A549 (cell line): ENCODE measurements at regions of chr3 and their contacts with region 1.

Region 1: DNA sequence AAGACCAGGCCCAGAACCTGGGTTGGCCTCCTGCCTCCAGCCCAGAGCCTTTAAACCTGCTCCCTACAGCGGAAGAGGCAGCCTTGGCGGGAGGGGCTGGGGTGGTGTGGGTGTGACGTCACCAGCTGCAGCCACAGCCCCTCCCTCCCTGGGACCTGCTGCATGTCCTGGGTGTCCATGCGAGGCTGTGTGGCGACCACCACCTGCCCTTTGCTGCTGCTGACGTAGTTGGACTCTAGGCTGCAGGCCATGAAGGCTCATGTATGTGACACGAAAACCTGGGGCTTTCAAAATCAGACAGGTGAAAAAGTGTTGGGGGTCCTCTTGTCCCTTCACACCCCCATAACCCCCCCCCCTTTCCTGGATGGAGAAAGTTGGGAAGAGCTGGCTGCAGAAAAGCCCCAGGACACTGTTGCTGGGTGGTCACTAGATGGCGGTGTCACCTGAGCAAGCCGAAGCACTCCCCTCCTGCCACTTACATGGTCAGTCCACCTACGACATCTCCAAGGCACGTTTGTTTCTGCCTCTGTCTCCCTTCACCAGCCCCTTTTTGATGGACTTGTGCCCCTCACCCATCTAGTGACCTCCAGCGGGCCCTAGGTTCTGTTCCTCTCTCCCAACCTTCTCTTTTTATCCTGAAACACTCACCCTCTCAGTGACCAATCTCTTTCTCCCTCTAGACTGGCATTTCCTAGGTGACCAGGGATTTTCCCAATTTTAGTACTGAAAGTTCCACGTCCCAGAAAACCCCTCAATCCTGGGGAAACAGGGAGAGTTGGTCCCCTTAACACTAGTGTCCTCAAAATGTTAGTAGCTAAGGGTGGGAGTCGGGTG is 35.2 kb downstream of the SLC6A20 start:
- DNase-seq: peak; percentile 64 to 71
- ATAC-seq: peak; percentile 95 to 97
- H3K4me3 ChIP-seq: no peak overlapping the region
- H3K27ac ChIP-seq: no peak overlapping the region
- H3K4me1 ChIP-seq: no peaks in the 10 kb centered on the region
- CTCF ChIP-seq: peak; percentile 63
- EP300 ChIP-seq: no peak
- POLR2A ChIP-seq: no peak
- RAD21 ChIP-seq: peak; percentile 73 to 79

Region 2: DNA sequence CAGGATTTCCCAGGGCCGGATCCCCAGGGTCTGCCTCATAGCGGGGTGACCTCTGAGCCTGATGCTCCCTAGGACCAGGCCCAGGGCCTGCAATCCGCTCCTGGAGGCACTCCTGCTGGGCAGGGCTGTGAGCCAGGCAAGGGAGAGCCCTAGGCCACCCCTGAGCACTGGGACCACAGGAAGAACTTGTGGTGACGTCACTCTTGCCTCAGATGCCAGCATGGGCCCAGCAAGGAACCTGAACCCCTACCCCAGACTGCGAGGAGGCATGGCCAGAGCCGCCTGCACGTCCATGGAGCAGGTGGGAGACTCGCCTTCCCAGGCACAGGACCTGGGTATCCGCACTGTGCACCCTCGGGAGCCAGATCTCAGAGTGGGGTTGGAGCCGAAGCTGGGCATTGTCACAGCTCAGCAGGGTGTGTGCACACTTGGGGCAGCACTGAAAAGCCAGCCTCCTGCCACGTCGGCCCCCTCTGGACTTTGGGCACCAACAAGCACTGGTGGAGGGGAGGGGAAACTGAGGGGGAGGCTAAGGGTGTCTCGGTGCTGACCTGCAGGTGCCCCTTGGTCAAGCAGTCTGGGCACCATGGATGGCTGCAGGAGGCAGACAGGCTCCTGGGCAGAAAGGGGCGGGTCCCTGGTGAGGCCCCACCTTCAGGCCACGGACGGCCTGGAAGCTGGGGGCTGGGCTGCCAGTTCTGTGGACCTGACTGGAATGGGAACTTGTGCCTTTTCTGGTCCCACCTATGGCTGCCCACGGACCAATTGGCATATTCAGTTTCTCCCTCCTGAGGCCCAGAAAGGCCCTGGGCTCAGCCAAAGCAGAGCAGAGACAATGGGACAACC is 14.1 kb before region 1 on chr3:
- CTCF ChIA-PET with region 1: interaction called, 39 read pairs
- POLR2A ChIA-PET with region 1: no interaction called
- DNase-seq: no peak
- ATAC-seq: no peak; a peak in 1 of 6 replicates
- H3K4me3 ChIP-seq: no peak overlapping the region
- H3K27ac ChIP-seq: no peak overlapping the region
- H3K4me1 ChIP-seq: no peaks in the 10 kb centered on the region
- CTCF ChIP-seq: no peak
- EP300 ChIP-seq: no peak
- POLR2A ChIP-seq: no peak
- RAD21 ChIP-seq: no peak

Region 3: GRCh38 chr3:45832691-45833090 is 71.6 kb after region 1 on chr3:
- CTCF ChIA-PET with region 1: interaction called, 17 read pairs
- POLR2A ChIA-PET with region 1: no interaction called
- DNase-seq: peak in 1 of 2 experiments; percentile 37
- ATAC-seq: peak; percentile 50 to 55; a peak in 3 of 6 replicates
- H3K4me3 ChIP-seq: no peak overlapping the region
- H3K27ac ChIP-seq: no peak overlapping the region
- H3K4me1 ChIP-seq: no peaks in the 10 kb centered on the region
- CTCF ChIP-seq: peak; percentile 47
- EP300 ChIP-seq: no peak
- POLR2A ChIP-seq: no peak
- RAD21 ChIP-seq: peak; percentile 58 to 65

Region 4: GRCh38 chr3:45929042-45929679 is 168.1 kb after region 1 on chr3:
- CTCF ChIA-PET with region 1: interaction called, 50 read pairs
- POLR2A ChIA-PET with region 1: no interaction called
- DNase-seq: peak; percentile 11 to 73
- ATAC-seq: peak; percentile 94 to 97; a peak in 5 of 6 replicates
- H3K4me3 ChIP-seq: no peak overlapping the region
- H3K27ac ChIP-seq: no peak overlapping the region
- H3K4me1 ChIP-seq: no peaks in the 10 kb centered on the region
- CTCF ChIP-seq: peak; percentile 57
- EP300 ChIP-seq: no peak
- POLR2A ChIP-seq: no peak
- RAD21 ChIP-seq: peak; percentile 74 to 82